Activated T-helper 2 cell treated with anti-CD3 and anti-CD28 coated beads, Interferon-gamma antibody, Interleukin-2, Interleukin-4, amounts not matched to agents 10 μg/mL and 5 μg/mL and 100 μg/mL, durations not matched to agents 14 hours and 24 hours and 36 hours (primary cell): ENCODE measurements at regions of chr10 and their contacts with region 1.

Region 1: GRCh38 chr10:16777473-16778370 is 39.5 kb downstream of the RSU1 start:
- DNase-seq: no peak
- H3K4me3 Mint-ChIP-seq: no peak overlapping the region
- H3K27ac Mint-ChIP-seq: peak overlapping the region; percentile 59
- H3K4me1 Mint-ChIP-seq: peaks cover 22% of the 10 kb centered on the region
- H3K27me3 Mint-ChIP-seq: no peaks in the 10 kb centered on the region

Region 2: DNA sequence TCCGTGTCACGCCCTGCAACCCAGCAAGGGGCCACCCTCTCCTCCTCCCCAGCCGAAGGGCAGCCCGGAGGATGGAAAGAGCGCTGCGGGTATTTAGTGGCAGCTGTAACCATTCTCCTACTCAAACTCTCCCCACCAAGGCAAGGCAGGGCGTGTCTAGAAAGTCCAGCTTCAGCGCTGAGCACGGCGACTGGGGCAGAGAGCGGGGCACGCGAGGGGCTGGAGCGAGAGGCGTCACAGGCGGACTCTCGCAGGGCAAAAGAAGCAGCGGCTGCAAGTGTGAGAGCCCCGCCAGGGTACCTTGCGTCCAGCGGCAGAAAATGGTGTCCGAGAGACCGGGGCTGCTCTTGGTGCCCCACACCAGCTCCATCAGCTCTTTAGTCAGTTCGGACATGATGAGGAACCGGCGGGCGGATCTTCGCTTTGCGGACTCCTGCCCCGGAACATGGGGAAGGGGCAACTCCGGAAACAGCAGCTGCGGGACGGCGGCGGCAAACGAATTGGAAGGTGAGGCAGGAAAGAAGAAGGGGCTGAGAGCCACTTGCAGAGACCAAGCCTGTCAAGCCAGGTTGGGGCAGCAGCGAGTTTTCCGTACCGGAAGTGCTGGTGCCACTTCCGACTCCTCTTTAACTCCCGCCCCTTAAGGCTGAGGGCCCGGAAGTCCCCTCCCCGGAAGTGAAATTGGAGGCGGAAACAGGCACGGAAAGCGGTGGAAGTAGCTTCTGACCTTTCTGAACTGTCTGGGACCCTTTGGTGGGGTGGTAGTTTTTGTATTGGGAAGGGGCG is 917.6 kb before region 1 on chr10 and contains the start of gene MINDY3:
- intact Hi-C with region 1: loop called (anchors 10 kb)
- DNase-seq: peak; percentile 69
- H3K4me3 Mint-ChIP-seq: peak within 1 kb of the TSS; percentile 92
- H3K27ac Mint-ChIP-seq: peak within 1 kb of the TSS; percentile 81
- H3K4me1 Mint-ChIP-seq: peaks cover 24% of the 10 kb centered on the region
- H3K27me3 Mint-ChIP-seq: peaks cover 17% of the 10 kb centered on the region
- total RNA-seq, gene MINDY3: 19.2 and 20.9 TPM in 2 replicates

Region 3: DNA sequence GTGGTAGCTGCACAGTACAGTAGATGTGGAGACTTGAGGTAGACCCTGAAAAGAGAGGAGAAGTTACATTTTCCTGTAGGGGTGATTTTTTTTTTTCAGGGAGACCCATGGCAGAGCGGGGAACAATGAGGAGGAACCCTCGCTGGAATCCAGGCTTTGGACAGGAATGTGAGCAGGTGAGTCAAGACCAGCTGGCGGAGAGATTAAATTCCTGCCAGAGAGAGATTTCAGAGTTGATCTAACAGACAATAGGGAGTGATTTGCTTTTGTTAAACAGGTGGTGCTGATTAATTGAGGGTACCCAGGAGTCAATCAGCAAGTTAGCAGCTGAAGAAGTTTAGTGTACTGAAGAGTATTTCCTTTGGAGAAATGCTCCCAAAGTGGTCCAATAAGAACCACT is 875.8 kb before region 1 on chr10:
- intact Hi-C with region 1: loop called (anchors 2 kb)
- DNase-seq: no peak
- H3K4me3 Mint-ChIP-seq: no peak overlapping the region
- H3K27ac Mint-ChIP-seq: no peak overlapping the region
- H3K4me1 Mint-ChIP-seq: no peaks in the 10 kb centered on the region
- H3K27me3 Mint-ChIP-seq: peaks cover 4% of the 10 kb centered on the region

Region 4: GRCh38 chr10:16436758-16437539 is 340.8 kb before region 1 on chr10 and contains the start of gene PTER:
- intact Hi-C with region 1: loop called (anchors 5 kb)
- DNase-seq: peak; percentile 97
- H3K4me3 Mint-ChIP-seq: peak within 1 kb of the TSS; percentile 93
- H3K27ac Mint-ChIP-seq: peak within 1 kb of the TSS; percentile 93
- H3K4me1 Mint-ChIP-seq: peaks cover 36% of the 10 kb centered on the region
- H3K27me3 Mint-ChIP-seq: peaks cover 11% of the 10 kb centered on the region
- total RNA-seq, gene PTER: 18.9 and 19.9 TPM in 2 replicates

Region 5: DNA sequence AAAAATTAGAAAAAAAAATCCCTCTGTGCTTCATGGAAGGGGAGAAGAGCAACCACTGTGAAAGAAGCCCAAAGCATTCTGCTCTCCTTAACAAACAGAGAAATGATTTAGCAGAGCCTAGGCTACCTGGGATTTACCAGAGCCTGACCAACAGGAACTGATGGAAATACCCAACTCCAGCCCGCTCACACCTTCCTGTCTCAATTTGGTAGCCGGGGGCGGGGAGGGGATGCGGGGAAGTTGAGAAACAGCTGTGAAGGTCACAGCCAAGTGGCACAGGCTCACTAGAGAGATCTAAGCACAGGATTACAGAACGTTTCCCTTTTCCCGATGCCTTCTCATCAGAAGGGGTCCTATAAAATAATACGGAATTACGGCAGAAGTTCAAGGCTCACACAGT is 21.9 kb after region 1 on chr10:
- intact Hi-C with region 1: loop called (anchors 2 kb)
- DNase-seq: no peak
- H3K4me3 Mint-ChIP-seq: no peak overlapping the region
- H3K27ac Mint-ChIP-seq: peak overlapping the region; percentile 58
- H3K4me1 Mint-ChIP-seq: peaks cover 34% of the 10 kb centered on the region
- H3K27me3 Mint-ChIP-seq: no peaks in the 10 kb centered on the region